ENCODE measurements at regions of chr11 and their contacts with region 1.

Region 1: DNA sequence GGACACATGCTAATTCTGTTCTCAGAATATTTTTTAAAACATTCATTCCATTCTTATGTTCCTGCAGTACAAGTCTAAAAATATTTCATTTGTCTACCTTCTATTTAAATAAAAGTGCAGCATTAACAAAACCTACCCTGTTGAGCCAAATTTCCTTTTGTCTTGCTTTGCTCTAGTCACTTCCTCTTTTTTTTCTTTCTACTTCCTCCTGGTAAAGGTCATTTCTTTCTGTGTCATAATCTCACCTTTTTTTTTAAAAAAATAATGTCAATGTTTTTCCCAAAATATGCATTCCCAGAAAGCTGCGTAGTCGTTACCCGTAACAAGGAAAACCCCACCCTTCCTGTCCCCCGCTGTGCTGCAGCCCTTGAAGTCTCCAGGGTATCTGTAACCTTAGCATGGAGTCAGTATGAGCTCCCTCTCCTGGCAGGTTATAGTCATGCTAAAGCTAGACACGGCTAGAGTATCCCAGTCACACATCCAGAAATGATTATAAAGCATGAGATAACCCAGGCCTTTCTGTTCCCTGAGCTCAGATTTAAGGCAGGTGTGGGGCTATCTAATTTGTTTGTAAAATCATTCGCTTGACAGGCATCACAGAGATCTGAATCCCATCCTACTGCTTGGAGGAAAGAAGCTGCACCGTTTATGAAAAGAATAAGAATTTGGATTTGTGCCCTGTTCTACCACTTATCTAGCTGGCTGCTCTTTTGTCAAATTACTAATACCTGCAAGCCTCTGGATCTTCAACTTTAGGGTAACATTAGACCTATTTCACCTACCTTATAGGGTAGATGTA is 51.1 kb upstream of the EED start:
- DNase-seq: peak; percentile 83
- ATAC-seq: peak; percentile 100
- H3K4me3 Mint-ChIP-seq: peak overlapping the region; percentile 75
- H3K27ac Mint-ChIP-seq: peak overlapping the region; percentile 40
- H3K4me1 Mint-ChIP-seq: peaks cover 18% of the 10 kb centered on the region
- H3K27me3 Mint-ChIP-seq: peaks cover 9% of the 10 kb centered on the region

Region 2: DNA sequence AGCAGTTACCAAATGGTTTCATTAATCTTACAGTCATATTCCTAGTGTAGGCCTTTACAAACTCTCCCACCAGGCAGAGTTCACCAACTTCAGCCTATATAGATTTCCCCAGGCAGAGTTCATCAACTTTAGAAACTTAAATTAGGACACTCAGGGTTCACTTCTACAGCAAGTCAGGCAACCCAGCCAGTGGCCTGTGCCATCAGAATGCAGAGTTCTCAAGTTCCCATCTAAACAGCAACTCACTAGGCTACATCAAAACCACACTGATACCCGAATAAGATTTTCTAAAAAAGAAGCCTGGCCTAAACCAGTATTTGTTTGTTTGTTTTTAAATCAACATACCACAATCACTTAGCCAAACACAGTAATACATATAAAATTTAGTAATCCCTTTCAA is 158.3 kb before region 1 on chr11:
- CTCF ChIA-PET with region 1: interaction called, 137 read pairs
- POLR2A ChIA-PET with region 1: no interaction called
- DNase-seq: no peak
- ATAC-seq: no peak
- H3K4me3 Mint-ChIP-seq: no peak overlapping the region
- H3K27ac Mint-ChIP-seq: no peak overlapping the region
- H3K4me1 Mint-ChIP-seq: peaks cover 8% of the 10 kb centered on the region
- H3K27me3 Mint-ChIP-seq: no peaks in the 10 kb centered on the region

Region 3: DNA sequence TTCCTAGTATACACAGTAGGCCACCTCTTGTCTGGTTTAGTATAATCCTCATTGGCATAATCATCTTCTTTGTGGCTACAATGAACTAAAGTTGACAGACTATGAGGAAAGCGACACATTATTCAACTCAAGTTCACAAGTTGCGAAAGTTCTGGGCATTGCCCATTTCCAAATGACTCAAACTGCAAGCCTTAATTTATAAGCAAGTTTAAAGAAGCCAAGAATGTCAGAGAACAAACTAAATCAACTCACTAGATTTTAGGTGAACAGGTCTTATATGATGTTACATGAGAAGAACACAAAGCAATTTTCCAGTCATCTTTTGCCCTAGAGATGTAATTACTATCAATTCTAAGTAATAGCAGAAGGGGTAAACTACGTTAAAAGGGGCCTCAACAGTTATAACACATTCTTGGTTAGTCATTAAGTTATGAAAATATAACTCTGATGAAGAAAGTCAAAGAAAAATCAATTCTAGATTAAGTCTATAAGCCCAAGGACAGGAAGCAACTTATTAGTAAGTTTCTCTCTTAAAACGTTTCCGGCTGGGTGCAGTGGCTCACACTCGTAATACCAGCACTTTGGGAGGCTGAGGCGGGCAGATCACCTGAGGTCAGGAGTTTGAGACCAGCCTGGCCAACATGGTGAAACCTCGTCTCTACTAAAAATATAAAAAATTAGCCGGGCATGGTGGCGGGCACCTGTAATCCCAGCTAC is 146.1 kb before region 1 on chr11:
- CTCF ChIA-PET with region 1: interaction called, 137 read pairs
- POLR2A ChIA-PET with region 1: no interaction called
- DNase-seq: no peak
- ATAC-seq: peak; percentile 30
- H3K4me3 Mint-ChIP-seq: no peak overlapping the region
- H3K27ac Mint-ChIP-seq: peak overlapping the region; percentile 78
- H3K4me1 Mint-ChIP-seq: peaks cover 77% of the 10 kb centered on the region
- H3K27me3 Mint-ChIP-seq: no peaks in the 10 kb centered on the region

Region 4: GRCh38 chr11:86068951-86069407 is 124.5 kb before region 1 on chr11 and contains the start of gene PICALM:
- CTCF ChIA-PET with region 1: interaction called, 82 read pairs
- POLR2A ChIA-PET with region 1: interaction called, 9 read pairs
- DNase-seq: peak; percentile 98
- ATAC-seq: peak; percentile 92
- H3K4me3 Mint-ChIP-seq: peak within 1 kb of the TSS; percentile 98
- H3K27ac Mint-ChIP-seq: peak within 1 kb of the TSS; percentile 95
- H3K4me1 Mint-ChIP-seq: peaks cover 37% of the 10 kb centered on the region
- H3K27me3 Mint-ChIP-seq: no peaks in the 10 kb centered on the region
- total RNA-seq, gene PICALM: 110 to 115 TPM

Region 5: DNA sequence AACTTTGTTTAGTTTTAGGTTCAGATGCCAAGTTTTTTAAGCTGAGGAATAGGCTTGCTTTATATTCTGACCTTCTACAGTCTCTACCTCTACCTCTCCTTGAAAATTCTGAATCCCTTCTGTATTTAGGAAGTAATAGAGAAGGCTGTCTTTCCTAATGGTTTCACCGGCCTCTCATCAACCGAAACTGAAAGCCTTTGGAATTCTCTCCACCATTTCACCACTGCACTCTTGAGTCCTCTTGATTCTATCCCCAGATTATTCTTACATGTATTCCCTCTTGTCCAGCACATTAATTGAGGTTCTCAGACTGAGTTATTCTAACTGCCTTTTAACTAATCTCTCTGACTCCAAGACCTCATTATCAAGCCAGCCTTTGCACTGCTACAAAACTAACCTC is 57.0 kb before region 1 on chr11:
- CTCF ChIA-PET with region 1: interaction called, 11 read pairs
- POLR2A ChIA-PET with region 1: interaction called, 3 read pairs
- DNase-seq: no peak
- ATAC-seq: no peak
- H3K4me3 Mint-ChIP-seq: no peak overlapping the region
- H3K27ac Mint-ChIP-seq: peak overlapping the region; percentile 7
- H3K4me1 Mint-ChIP-seq: peaks cover 39% of the 10 kb centered on the region
- H3K27me3 Mint-ChIP-seq: no peaks in the 10 kb centered on the region

Region 6: DNA sequence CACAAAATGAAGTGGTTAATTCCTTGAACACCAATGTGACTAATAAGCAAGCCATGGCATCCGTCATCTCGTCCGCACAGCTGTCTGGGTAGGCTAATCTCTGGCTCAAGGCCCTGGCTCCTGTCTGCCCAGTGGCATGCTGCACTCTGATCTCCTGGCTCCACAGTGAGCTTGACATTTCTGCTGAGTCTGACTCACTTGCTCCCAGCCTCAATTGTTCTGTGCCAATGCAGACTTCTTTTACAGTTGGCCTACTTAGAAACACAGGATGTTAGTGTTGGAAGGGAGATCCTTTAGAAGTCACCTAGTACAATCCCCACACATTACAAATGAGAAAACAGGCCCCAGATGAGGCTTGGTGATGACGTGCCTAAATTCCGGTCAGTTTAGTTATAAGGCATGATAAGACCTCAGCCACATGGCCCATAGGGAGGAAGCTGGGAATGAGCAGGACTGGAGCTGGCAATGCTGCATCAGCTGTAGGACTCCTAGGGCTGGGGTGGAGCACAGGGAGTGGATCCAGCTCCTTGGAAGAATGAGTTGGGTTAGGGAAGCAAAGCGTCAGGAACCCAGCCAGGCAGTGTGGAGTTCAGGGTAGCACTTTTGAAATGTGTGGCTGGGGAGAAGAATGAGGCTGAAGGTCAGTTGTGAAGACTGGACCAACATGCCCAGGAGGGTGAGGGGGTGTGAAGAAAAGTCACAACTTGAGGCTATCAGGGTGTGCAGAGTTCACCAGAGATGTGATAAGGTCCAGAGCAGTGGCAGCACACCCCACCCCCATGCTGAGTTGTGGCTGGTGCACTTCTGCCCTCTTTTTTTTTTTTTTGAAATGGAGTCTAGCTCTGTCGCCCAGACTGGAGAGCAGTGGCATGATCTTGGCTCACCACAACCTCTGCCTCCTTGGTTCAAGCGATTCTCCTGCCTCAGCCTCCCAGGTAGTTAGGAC is 19.1 kb before region 1 on chr11:
- CTCF ChIA-PET with region 1: interaction called, 18 read pairs
- POLR2A ChIA-PET with region 1: no interaction called
- DNase-seq: no peak
- ATAC-seq: no peak
- H3K4me3 Mint-ChIP-seq: no peak overlapping the region
- H3K27ac Mint-ChIP-seq: no peak overlapping the region
- H3K4me1 Mint-ChIP-seq: peaks cover 20% of the 10 kb centered on the region
- H3K27me3 Mint-ChIP-seq: peaks cover 2% of the 10 kb centered on the region

Region 7: GRCh38 chr11:86218125-86219084 is 24.9 kb after region 1 on chr11:
- CTCF ChIA-PET with region 1: interaction called, 14 read pairs
- POLR2A ChIA-PET with region 1: no interaction called
- DNase-seq: peak; percentile 70
- ATAC-seq: peak; percentile 89
- H3K4me3 Mint-ChIP-seq: peak overlapping the region; percentile 26
- H3K27ac Mint-ChIP-seq: no peak overlapping the region
- H3K4me1 Mint-ChIP-seq: peaks cover 25% of the 10 kb centered on the region
- H3K27me3 Mint-ChIP-seq: peaks cover 4% of the 10 kb centered on the region

Measured in activated CD8-positive, alpha-beta T cell treated with anti-CD3 and anti-CD28 coated beads, Interleukin-2, amount 10 ng/mL, durations not matched to agents 7 days and 5 days (primary cell).